ENCODE measurements at regions of chr4 and their contacts with region 1.

Region 1: GRCh38 chr4:146342600-146343192 is 128.4 kb downstream of the REELD1 start:
- DNase-seq: peak; percentile 42
- H3K4me3 ChIP-seq: no peak overlapping the region
- H3K27ac ChIP-seq: no peak overlapping the region
- H3K4me1 ChIP-seq: peaks cover 5% of the 10 kb centered on the region
- CTCF ChIP-seq: peak; percentile 79

Region 2: DNA sequence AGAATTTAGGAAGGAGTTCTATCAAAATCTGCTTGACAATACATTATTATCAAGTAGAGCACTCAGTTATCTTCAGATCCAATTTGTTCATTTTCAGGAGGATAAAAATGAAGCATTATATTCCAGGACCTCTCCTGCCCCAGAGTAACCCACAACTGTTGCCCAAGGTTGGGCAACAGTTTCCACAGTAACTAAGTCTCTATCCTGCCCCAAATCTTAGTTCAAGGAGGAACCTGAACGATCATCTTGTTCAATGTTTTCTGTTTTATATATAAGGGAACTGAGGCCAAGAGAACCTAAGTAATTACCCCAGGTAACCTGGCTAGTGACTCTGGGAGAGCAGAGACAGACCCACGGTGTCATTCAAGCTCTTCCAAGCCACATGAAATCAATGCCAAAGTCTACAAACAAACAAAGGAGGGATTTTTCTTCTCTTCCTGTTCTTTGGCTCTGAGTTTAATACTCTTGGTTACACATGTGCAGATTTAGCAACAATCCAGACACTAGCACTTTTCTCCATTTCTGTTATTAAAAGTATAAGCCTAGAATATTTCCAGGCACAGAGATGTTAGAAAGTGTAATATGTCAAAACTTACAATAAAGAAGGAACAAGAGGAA is 557.2 kb before region 1 on chr4:
- CTCF ChIA-PET with region 1: no interaction called
- POLR2A ChIA-PET with region 1: no interaction called
- intact Hi-C with region 1: no loop called
- DNase-seq: no peak
- H3K4me3 ChIP-seq: no peak overlapping the region
- H3K27ac ChIP-seq: no peak overlapping the region
- H3K4me1 ChIP-seq: no peaks in the 10 kb centered on the region
- CTCF ChIP-seq: no peak

Region 3: DNA sequence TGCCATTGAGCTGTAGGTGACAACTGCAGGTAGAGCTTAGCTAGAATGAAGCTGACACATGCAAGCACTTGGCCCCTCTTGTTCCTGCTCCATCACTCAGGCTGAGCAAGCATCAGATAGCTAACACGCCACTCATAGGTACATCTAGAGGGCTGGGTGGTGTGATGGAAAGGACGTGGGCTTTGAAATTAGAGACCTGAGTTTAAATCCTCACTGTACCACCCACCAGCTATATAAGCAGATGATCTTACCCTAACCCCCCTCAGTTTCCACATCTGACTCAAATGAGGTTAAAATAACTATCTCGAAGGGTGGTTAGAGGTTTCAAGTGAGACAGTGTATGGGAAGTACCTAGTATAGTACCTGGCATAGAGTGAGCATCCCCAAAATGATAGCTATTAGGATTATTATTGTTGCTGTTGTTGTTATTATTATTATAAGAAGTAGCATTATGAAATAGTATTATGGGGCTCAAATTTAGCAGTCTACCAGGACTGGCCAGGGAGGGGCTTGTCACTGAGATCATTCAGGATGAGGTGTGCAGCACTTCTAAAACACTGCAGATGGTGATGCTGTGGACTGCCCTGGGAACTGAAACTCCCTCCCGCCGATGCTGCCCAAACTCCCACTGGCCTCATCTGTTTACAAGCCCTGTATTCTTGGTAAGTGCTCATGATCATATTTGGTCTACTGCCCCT is 69.3 kb before region 1 on chr4:
- CTCF ChIA-PET with region 1: no interaction called
- POLR2A ChIA-PET with region 1: no interaction called
- intact Hi-C with region 1: no loop called
- DNase-seq: no peak
- H3K4me3 ChIP-seq: no peak overlapping the region
- H3K27ac ChIP-seq: no peak overlapping the region
- H3K4me1 ChIP-seq: peaks cover 12% of the 10 kb centered on the region
- CTCF ChIP-seq: no peak

Region 4: GRCh38 chr4:146916479-146917076 is 573.9 kb after region 1 on chr4:
- CTCF ChIA-PET with region 1: no interaction called
- POLR2A ChIA-PET with region 1: no interaction called
- intact Hi-C with region 1: loop called (anchors 5 kb)
- DNase-seq: peak; percentile 35
- H3K4me3 ChIP-seq: no peak overlapping the region
- H3K27ac ChIP-seq: no peak overlapping the region
- H3K4me1 ChIP-seq: no peaks in the 10 kb centered on the region
- CTCF ChIP-seq: peak; percentile 89